ENCODE measurements at regions of chr20 and their contacts with region 1.

Region 1: GRCh38 chr20:3430376-3431069 is 23.1 kb upstream of the DNAAF9 start:
- DNase-seq: no peak
- ATAC-seq: peak in 7 of 8 donors; percentile 49 to 68 (median 55)
- H3K4me3 ChIP-seq: peak overlapping the region in 1 of 10 donors; percentile 7
- H3K27ac ChIP-seq: peak overlapping the region in 3 of 10 donors; percentile 3 to 70 (median 41)
- H3K4me1 ChIP-seq: peaks cover 0 to 16% (median 0%) of the 10 kb centered on the region in 9 donors
- H3K27me3 ChIP-seq: no peaks in the 10 kb centered on the region
- CTCF ChIP-seq: no peak

Region 2: GRCh38 chr20:2292416-2293110 is 1138.0 kb before region 1 on chr20:
- intact Hi-C with region 1: loop called in 1 of 10 experiments (anchors 5 kb)
- DNase-seq: no peak
- ATAC-seq: peak in 3 of 8 donors; percentile 24 to 61 (median 30)
- H3K4me3 ChIP-seq: no peak overlapping the region
- H3K27ac ChIP-seq: peak overlapping the region in 1 of 10 donors; percentile 80
- H3K4me1 ChIP-seq: peaks cover 0 to 55% (median 8%) of the 10 kb centered on the region in 9 donors
- H3K27me3 ChIP-seq: peaks cover 0 to 13% (median 6%) of the 10 kb centered on the region in 7 donors
- CTCF ChIP-seq: no peak

Region 3: DNA sequence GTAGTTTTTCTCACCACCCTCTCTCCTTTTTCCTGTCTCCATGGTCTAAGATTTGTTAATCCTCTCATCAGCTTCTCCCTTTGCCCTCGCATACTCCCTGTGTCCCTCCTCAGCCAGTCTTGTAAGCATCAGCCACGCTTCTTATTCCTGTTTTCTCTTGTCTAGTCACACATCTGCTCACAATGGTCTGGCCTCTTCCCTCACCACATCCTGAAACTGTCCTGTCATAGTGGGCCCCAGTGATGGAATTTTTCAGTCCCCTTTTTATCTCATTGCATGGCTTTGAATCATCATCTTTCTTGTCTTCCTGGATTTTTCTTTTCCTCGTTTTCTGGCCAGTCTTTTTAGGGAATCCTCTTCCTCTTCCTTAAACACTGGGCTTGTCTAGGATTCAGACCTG is 175.5 kb after region 1 on chr20:
- intact Hi-C with region 1: no loop called
- DNase-seq: no peak
- ATAC-seq: no peak
- H3K4me3 ChIP-seq: no peak overlapping the region
- H3K27ac ChIP-seq: no peak overlapping the region
- H3K4me1 ChIP-seq: no peaks in the 10 kb centered on the region
- H3K27me3 ChIP-seq: no peaks in the 10 kb centered on the region
- CTCF ChIP-seq: no peak